ENCODE measurements at regions of chr18 and their contacts with region 1.

Region 1: DNA sequence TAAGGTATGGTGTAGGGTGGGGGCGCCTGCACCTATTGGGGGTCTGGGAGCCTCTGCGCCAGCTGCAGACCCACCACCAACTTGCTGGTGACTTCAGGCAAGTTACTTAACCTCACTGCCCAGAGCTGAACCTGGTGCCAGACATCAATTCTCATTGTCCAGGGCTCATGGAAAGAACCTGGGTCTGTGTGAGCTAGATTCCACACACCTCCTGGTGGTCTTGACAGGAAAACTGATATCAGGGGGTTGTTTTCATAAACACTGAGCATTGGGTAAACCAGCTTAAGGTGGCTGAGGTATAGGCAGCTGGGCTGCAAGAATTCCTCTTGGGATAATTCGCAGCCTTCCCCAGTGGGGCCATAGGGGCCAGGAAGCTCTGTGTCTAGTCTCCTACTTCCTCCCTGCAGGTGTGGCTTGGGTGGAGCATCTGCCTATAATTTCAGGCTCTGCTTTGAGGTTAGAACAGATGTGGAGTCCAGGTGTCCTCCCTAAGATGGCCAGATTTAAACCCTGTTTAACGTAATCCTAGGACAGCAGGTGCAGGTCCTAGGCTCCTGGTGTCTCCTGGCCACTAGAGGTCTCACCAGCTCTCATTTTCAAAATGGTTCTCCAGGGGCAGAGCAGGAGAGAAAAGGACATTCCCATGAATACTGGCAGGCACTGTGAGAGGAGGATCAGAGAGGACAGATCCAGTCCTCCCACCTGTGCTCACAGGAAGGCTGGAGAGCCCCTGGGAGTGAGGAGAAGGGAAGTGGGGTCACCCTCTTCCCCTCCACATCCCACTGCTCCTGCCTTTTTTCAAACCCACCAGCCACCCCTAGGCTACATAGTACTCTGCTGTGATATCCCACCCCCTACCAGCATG is 100.4 kb upstream of the SMAD2 start:
- DNase-seq: peak; percentile 66
- H3K4me3 ChIP-seq: no peak overlapping the region
- H3K27ac ChIP-seq: no peak overlapping the region
- H3K4me1 ChIP-seq: no peaks in the 10 kb centered on the region
- H3K27me3 ChIP-seq: no peaks in the 10 kb centered on the region
- CTCF ChIP-seq: peak; percentile 61 to 83 (median 72)
- POLR2A ChIP-seq: no peak

Region 2: GRCh38 chr18:48345596-48345995 is 314.7 kb after region 1 on chr18:
- intact Hi-C with region 1: loop called (anchors 10 kb)
- DNase-seq: no peak
- H3K4me3 ChIP-seq: no peak overlapping the region
- H3K27ac ChIP-seq: no peak overlapping the region
- H3K4me1 ChIP-seq: no peaks in the 10 kb centered on the region
- H3K27me3 ChIP-seq: no peaks in the 10 kb centered on the region
- CTCF ChIP-seq: peak in 2 of 4 experiments; percentile 33 to 41
- POLR2A ChIP-seq: no peak

Region 3: GRCh38 chr18:48445540-48445939 is 414.7 kb after region 1 on chr18:
- intact Hi-C with region 1: loop called (anchors 1 kb)
- DNase-seq: peak; percentile 57
- H3K4me3 ChIP-seq: no peak overlapping the region
- H3K27ac ChIP-seq: no peak overlapping the region
- H3K4me1 ChIP-seq: no peaks in the 10 kb centered on the region
- H3K27me3 ChIP-seq: no peaks in the 10 kb centered on the region
- CTCF ChIP-seq: peak; percentile 44 to 92 (median 58)
- POLR2A ChIP-seq: no peak